ENCODE measurements at regions of chr11 and their contacts with region 1.

Region 1: GRCh38 chr11:63635762-63636465 is 21.7 kb upstream of the PLAAT3 start:
- DNase-seq: peak; percentile 79
- ATAC-seq: peak; percentile 85
- H3K4me3 Mint-ChIP-seq: no peak overlapping the region
- H3K27ac Mint-ChIP-seq: no peak overlapping the region
- H3K4me1 Mint-ChIP-seq: peaks cover 12% of the 10 kb centered on the region
- H3K27me3 Mint-ChIP-seq: no peaks in the 10 kb centered on the region

Region 2: GRCh38 chr11:63032457-63032856 is 603.5 kb before region 1 on chr11:
- CTCF ChIA-PET with region 1: no interaction called
- POLR2A ChIA-PET with region 1: no interaction called
- intact Hi-C with region 1: loop called (anchors 5 to 10 kb)
- DNase-seq: no peak
- ATAC-seq: no peak
- H3K4me3 Mint-ChIP-seq: no peak overlapping the region
- H3K27ac Mint-ChIP-seq: no peak overlapping the region
- H3K4me1 Mint-ChIP-seq: peaks cover 2% of the 10 kb centered on the region
- H3K27me3 Mint-ChIP-seq: peaks cover 25% of the 10 kb centered on the region

Region 3: DNA sequence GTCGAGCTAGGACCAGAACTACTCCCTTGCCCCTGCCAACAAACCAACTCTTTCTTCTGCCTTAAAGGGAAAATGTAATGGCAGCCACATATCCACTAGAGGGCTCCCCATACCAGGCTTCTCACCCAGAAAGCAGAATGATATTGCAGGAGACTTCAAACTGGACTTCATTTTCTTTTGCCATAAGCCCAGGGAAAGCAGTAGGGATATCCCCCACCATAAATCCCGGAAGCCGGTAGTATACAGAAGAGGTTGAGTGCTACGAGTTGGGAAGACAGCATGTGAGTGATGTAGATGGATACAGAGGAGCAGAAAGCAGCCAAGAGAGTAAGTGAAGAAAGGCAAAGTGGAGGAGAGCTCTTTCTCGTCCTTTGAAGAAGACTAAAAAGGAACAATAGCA is 157.0 kb before region 1 on chr11:
- CTCF ChIA-PET with region 1: interaction called, 125 read pairs
- POLR2A ChIA-PET with region 1: no interaction called
- intact Hi-C with region 1: loop called (anchors 1 kb)
- DNase-seq: peak; percentile 60
- ATAC-seq: peak; percentile 69
- H3K4me3 Mint-ChIP-seq: no peak overlapping the region
- H3K27ac Mint-ChIP-seq: no peak overlapping the region
- H3K4me1 Mint-ChIP-seq: no peaks in the 10 kb centered on the region
- H3K27me3 Mint-ChIP-seq: peaks cover 4% of the 10 kb centered on the region

Region 4: DNA sequence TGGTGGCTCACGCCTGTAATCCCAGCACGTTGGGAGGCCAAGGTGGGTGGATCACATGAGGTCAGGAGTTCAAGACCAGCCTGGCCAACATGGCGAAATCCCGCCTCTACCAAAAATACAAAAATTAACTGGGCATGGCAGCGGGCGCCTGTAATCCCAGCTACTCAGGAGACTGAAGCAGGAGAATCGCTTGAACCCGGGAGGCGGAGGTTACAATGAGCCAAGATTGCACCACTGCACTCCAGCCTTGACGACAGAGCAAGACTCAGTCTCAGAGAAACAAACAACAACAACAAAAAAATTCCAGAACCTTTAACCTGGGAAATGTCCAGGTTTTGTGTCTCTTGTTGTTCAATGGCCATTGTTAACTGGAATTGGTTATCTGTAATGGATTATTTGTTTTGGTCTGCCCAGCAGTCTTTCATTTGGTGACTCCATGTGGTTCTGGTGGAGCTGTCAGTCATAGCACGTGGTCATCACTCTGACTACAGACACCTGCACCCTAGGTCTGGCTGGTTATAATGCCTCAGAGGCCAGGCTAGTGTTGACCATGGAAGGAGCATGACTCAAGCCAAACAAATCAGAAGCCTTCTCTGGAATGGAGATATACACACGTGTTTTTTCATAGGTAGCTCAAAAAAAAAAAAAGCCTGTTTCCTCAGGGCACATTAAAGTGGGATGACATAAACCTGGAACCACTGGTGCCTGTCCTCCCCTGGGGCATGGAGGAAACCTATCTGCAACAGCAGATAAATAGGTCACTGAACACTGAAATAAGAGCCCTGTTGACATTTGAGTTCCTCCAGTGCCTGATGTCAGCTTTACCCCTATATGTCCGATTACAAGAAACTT is 13.8 kb before region 1 on chr11:
- CTCF ChIA-PET with region 1: interaction called, 13 read pairs
- POLR2A ChIA-PET with region 1: no interaction called
- intact Hi-C with region 1: no loop called
- DNase-seq: no peak
- ATAC-seq: no peak
- H3K4me3 Mint-ChIP-seq: no peak overlapping the region
- H3K27ac Mint-ChIP-seq: no peak overlapping the region
- H3K4me1 Mint-ChIP-seq: peaks cover 6% of the 10 kb centered on the region
- H3K27me3 Mint-ChIP-seq: no peaks in the 10 kb centered on the region

Region 5: DNA sequence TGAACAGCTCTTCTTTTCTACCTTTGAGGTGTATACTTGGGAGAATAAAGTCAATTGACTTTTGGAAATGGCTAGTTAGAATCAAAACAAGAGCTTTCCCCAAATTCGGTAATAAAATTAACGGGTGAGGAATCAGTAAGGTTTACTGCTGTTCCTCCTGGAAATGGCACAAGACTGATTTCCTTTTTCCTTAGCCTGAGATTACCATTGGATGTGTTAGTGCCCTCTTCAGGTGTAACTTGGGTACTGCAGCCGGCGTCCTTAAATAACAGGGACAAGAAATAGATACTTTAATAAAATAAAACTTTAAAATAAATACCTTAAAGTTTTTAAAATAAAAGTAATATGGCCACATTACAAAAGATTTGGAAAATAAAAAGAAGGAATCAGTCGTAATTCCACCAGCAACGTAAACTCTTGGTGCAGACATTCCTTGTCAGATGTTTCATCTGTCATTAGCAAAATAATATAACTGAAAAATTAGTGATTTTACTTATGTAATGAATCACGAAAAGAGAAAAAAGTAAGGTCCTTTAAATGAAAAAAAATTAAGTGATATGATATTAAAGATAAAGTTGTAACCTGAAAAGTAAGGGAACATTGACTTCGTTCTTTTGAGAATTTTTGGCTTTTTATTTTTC is 102.9 kb after region 1 on chr11:
- CTCF ChIA-PET with region 1: interaction called, 30 read pairs
- POLR2A ChIA-PET with region 1: no interaction called
- intact Hi-C with region 1: loop called in 1 of 2 experiments (anchors 5 kb)
- DNase-seq: peak; percentile 79
- ATAC-seq: no peak
- H3K4me3 Mint-ChIP-seq: no peak overlapping the region
- H3K27ac Mint-ChIP-seq: no peak overlapping the region
- H3K4me1 Mint-ChIP-seq: peaks cover 2% of the 10 kb centered on the region
- H3K27me3 Mint-ChIP-seq: no peaks in the 10 kb centered on the region

Region 6: DNA sequence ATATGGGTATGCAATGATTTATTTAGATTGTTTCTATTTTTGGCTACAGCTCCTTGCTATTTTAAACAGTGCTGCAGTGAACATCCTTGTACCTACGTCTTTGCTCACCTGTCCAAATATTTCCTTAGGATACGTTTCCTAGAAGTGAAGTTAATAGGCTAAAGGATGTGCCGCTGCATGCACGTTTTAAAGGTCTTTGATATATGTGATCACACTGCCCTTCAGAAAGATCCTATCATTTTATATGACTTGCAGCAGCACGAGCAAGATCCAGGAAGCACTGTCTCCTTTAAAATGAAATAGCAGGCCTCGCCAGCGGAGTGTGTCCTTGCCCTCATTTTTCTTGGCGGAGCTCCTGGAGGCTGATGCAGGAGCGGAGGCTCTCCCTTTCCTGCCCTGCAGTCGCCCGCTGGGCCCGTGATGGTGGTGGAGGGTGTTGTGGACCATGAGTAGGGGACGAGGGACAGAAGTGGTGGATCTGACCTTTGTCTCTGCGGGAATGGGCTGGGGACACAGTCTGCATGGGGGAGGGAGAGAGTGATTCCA is 742.5 kb after region 1 on chr11:
- CTCF ChIA-PET with region 1: no interaction called
- POLR2A ChIA-PET with region 1: no interaction called
- intact Hi-C with region 1: no loop called
- DNase-seq: no peak
- ATAC-seq: no peak
- H3K4me3 Mint-ChIP-seq: no peak overlapping the region
- H3K27ac Mint-ChIP-seq: no peak overlapping the region
- H3K4me1 Mint-ChIP-seq: peaks cover 4% of the 10 kb centered on the region
- H3K27me3 Mint-ChIP-seq: no peaks in the 10 kb centered on the region